Calu3 (cell line): ENCODE measurements at regions of chr18 and their contacts with region 1.

Region 1: DNA sequence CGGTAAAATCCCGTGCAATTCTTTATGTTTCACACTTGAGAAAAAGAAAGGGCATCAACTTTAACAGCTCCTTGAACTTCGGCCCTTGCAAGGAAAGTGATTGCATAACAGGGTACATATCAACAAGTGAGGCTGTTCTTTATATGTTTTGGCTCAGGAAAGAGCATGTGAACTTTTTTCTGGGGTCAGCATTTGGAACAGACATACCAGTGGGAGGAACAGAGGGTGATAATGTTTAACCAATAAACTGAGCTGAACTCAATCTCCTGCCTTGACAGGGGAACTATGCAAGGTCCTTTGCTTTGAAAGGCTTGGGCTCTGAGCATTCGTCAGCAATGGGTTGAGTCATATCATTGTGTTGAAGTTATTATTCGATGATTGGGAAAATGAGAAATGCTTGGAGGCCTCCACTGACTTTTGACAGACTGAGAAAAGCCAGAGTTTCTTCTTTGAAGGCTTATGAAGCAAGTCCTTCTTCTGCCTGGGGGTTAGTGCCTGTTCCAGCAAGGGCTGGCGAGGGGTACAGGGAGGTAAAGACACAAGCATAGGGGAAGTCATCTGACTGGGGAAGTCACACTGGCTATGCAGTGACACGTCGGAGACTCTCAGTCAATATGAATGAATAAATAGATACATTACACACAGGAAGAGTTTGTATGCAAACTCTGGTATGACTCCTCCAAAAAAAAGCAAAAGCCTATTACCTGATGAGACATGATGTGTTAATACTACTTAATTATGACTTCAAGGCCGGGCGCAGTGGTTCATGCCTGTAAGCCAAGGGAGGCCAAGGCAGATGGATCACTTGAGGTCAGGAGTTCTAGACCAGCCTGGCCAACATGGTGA is 57.2 kb downstream of the CYB5A start:
- DNase-seq: peak; percentile 62
- H3K4me3 Mint-ChIP-seq: peak overlapping the region; percentile 31
- H3K27ac Mint-ChIP-seq: peak overlapping the region; percentile 82
- H3K4me1 Mint-ChIP-seq: peaks cover 34% of the 10 kb centered on the region
- H3K27me3 Mint-ChIP-seq: no peaks in the 10 kb centered on the region
- CTCF ChIP-seq: no peak

Region 2: GRCh38 chr18:73891572-73892421 is 342.8 kb before region 1 on chr18:
- CTCF ChIA-PET with region 1: no interaction called
- intact Hi-C with region 1: no loop called
- DNase-seq: no peak
- H3K4me3 Mint-ChIP-seq: no peak overlapping the region
- H3K27ac Mint-ChIP-seq: no peak overlapping the region
- H3K4me1 Mint-ChIP-seq: peaks cover 46% of the 10 kb centered on the region
- H3K27me3 Mint-ChIP-seq: no peaks in the 10 kb centered on the region
- CTCF ChIP-seq: no peak

Region 3: DNA sequence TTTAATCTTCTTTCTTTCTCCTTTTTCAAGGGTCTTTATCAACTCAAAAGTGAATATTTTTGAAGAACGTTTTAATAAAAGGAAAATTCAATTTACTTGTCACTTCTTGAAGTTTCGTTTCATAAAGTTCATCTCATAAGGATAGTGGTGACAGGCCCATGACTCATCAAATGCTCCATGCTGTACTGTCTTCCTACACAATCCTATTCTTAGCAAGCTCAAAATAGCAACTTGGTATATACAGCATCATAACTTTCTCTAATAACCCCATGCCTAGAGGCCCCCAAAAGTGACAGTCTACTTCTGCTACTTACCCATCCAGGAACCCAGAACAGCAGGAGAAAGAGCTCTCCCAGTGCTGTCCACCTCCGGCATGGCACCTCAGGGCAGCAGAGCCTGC is 94.7 kb before region 1 on chr18:
- CTCF ChIA-PET with region 1: no interaction called
- intact Hi-C with region 1: no loop called
- DNase-seq: no peak
- H3K4me3 Mint-ChIP-seq: no peak overlapping the region
- H3K27ac Mint-ChIP-seq: no peak overlapping the region
- H3K4me1 Mint-ChIP-seq: no peaks in the 10 kb centered on the region
- H3K27me3 Mint-ChIP-seq: peaks cover 32% of the 10 kb centered on the region
- CTCF ChIP-seq: no peak

Region 4: GRCh38 chr18:74291771-74292540 is 57.4 kb after region 1 on chr18 and contains the start of gene CYB5A:
- CTCF ChIA-PET with region 1: no interaction called
- intact Hi-C with region 1: loop called (anchors 1 kb)
- DNase-seq: peak; percentile 98
- H3K4me3 Mint-ChIP-seq: peak within 1 kb of the TSS; percentile 100
- H3K27ac Mint-ChIP-seq: peak within 1 kb of the TSS; percentile 81
- H3K4me1 Mint-ChIP-seq: peaks cover 22% of the 10 kb centered on the region
- H3K27me3 Mint-ChIP-seq: no peaks in the 10 kb centered on the region
- CTCF ChIP-seq: no peak
- total RNA-seq, gene CYB5A: 143 and 169 TPM in 2 replicates